ENCODE measurements at regions of chr10 and their contacts with region 1.

Region 1: DNA sequence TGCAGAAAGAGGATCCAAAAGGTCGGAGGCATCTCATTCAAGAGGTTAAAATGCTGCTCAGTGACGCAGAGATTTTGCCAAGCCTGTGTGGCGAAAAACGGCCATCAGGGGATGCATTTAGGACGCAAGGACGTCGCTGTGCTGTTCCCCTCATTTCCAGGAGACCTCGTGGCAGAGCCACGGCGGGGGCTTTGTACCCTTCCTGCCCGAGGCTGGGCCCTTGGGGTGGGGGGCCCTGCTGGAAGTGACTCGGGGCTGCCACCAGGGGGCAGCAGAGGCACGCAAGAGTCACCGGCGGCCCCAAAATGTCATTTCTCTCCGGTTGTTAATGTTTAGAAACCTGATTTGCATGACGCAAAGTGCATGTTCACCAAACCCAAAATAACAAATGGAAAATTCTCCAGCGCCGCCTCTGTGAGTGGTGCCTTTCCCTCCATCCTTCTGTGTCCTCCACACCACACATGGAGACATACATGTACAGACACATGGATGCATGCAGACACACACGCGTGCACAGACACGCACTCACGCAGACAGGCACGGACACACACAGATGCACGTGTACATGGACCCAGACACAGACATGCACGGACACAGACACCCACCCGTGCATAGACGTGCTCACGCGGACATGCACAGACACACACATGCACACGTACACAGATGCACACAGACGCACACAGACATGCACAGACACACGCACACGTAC is 51.0 kb upstream of the NKX6-2 start:
- DNase-seq: peak; percentile 30
- ATAC-seq: peak; percentile 78
- H3K4me3 ChIP-seq: peak overlapping the region in 1 of 3 experiments; percentile 21; a peak in 1 of 6 replicates
- H3K27ac ChIP-seq: no peak overlapping the region
- H3K4me1 ChIP-seq: peaks cover 19% of the 10 kb centered on the region
- H3K27me3 ChIP-seq: peaks cover 8 to 39% of the 10 kb centered on the region in 2 experiments; a peak in 4 of 5 replicates
- CTCF ChIP-seq: peak; percentile 85
- EP300 ChIP-seq: no peak
- POLR2A ChIP-seq: no peak
- RAD21 ChIP-seq: peak; percentile 79

Region 2: GRCh38 chr10:132714096-132714721 is 122.8 kb before region 1 on chr10:
- CTCF ChIA-PET with region 1: no interaction called
- POLR2A ChIA-PET with region 1: no interaction called
- in situ Hi-C with region 1: no loop called
- intact Hi-C with region 1: no loop called
- DNase-seq: no peak
- ATAC-seq: no peak
- H3K4me3 ChIP-seq: no peak overlapping the region
- H3K27ac ChIP-seq: no peak overlapping the region
- H3K4me1 ChIP-seq: no peaks in the 10 kb centered on the region
- H3K27me3 ChIP-seq: no peaks in the 10 kb centered on the region
- CTCF ChIP-seq: no peak
- EP300 ChIP-seq: no peak
- POLR2A ChIP-seq: no peak
- RAD21 ChIP-seq: no peak

Region 3: DNA sequence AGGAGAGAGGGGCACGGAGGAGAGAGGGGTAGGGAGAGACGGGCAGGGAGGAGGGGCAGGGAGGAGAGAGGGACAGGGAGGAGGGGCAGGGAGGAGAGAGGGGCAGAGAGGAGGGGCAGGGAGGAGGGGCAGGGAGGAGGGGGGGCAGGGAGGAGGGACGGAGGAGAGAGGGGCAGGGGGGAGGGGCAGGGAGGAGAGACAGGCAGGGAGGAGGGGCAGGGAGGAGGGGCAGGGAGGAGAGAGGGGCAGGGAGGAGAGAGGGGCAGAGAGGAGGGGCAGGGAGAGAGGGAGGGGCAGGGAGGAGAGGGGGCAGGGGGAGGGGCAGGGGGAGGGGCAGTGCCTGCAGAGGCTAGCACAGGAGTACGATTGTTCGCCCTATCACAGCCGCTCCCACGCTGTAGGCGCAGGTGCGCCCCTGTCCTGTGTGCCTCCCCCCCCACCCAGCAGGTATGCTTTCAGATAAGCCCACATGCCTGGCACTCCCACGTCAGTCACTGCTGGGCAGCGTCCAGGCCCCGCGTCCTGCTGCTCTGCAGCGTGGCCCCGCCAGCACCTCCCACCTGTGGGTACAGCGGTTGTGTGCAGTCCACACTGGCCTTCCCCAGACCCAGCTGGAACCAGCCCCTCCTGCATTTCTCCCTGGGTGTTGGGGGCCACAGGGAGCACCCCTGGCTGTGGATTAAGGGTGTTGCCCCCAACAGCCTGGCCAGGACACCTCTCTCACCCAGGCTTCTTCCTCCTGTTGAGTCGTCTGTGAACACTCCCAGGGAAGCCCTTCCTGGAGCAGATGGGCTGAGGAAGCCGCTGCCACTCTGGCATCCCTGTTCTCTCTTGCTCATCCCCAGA is 61.9 kb before region 1 on chr10:
- CTCF ChIA-PET with region 1: no interaction called
- POLR2A ChIA-PET with region 1: no interaction called
- in situ Hi-C with region 1: no loop called
- intact Hi-C with region 1: no loop called
- DNase-seq: no peak
- ATAC-seq: no peak
- H3K4me3 ChIP-seq: no peak overlapping the region; a peak in 1 of 6 replicates
- H3K27ac ChIP-seq: no peak overlapping the region
- H3K4me1 ChIP-seq: peaks cover 12% of the 10 kb centered on the region
- H3K27me3 ChIP-seq: no peaks in the 10 kb centered on the region
- CTCF ChIP-seq: no peak
- EP300 ChIP-seq: no peak
- POLR2A ChIP-seq: no peak
- RAD21 ChIP-seq: no peak

Region 4: GRCh38 chr10:132886211-132887099 is 49.5 kb after region 1 on chr10:
- CTCF ChIA-PET with region 1: interaction called, 6 read pairs
- POLR2A ChIA-PET with region 1: no interaction called
- in situ Hi-C with region 1: no loop called
- intact Hi-C with region 1: loop called (anchors 1 kb)
- DNase-seq: peak; percentile 7
- ATAC-seq: peak; percentile 66
- H3K4me3 ChIP-seq: no peak overlapping the region
- H3K27ac ChIP-seq: no peak overlapping the region
- H3K4me1 ChIP-seq: no peaks in the 10 kb centered on the region
- H3K27me3 ChIP-seq: peaks cover 7 to 41% of the 10 kb centered on the region in 2 experiments; a peak in 3 of 5 replicates
- CTCF ChIP-seq: peak; percentile 55
- EP300 ChIP-seq: no peak
- POLR2A ChIP-seq: no peak
- RAD21 ChIP-seq: no peak